Mammary epithelial cell (primary cell): ENCODE measurements at regions of chr1 and their contacts with region 1.

Region 1: DNA sequence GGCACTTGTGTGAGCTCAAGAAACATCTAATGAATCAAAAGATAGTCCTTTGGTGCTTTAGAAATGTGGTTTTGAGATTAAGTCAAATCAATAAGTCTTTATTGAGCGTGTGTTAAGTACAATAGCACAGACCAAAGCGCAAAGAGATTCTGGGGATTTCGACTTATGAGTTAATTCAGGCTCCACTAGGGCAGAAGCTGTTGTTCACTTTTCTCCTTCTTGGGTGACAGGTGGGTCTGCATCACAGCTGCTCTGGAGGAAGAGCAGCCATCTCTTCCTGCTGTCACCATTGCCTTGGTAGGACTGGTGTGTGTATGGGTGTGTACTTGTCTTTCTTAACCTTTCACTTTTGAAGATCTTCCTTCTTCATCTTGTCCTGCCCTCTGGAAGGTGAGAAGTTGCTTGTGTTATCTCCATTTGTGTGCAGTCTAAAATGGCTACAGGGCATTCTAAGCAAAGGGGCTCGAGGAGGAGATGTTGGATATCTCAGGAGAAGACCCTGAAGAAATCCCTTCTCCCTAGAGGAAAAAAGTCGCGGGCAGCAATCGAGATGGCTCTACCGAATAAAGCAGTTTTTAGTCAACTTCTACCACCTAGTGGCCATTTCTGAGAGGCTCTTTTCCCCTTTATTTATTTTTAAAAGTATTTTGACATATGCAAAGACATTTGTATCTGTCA is 22.9 kb upstream of the DISC1 start:
- DNase-seq: peak; percentile 33
- H3K4me3 ChIP-seq: peak overlapping the region; percentile 54 to 91 (median 61)
- H3K27ac ChIP-seq: no peak overlapping the region
- H3K4me1 ChIP-seq: peaks cover 6% of the 10 kb centered on the region
- H3K27me3 ChIP-seq: no peaks in the 10 kb centered on the region
- CTCF ChIP-seq: peak; percentile 70

Region 2: DNA sequence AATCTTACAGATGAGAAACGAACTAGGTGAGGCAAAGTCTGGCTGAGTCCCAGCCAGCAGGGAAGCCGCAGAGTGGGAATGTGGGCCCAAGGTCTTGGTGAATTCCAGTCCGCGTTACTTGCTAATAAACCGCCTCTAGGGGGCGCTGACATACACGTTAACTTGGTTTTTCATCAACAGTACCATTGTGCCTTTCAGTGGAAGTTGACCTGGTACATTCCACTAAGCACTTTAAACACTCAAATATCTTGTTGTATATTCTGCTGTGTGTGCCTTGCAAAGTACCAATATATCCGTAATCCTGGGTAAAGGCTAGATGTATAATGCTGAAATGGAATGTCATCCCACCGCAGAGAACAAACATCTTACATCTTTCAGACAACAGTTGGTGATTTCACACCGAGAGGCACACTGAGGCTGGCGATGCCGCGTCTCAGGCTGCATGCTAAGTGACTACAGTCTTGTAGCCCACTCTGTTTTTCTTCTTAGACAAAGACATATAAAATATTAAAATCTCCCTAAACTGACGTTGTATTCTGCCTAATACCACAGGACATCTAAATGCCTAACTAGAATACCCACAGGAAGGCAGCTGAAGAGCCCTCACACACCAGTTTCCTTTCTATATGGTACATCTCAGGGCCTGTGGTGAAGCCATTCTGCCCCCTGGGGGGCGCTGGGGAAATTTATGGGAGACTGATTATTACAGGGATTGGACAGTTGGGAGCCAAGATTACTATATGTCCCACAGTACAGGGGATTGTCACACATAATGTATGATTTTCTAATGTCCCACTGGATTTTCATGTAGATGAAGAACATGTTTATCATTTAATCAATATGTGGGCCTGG is 686.2 kb before region 1 on chr1:
- CTCF ChIA-PET with region 1: no interaction called
- dilution Hi-C with region 1: no loop called
- in situ Hi-C with region 1: no loop called
- intact Hi-C with region 1: loop called (anchors 5 kb)
- DNase-seq: peak; percentile 44
- H3K4me3 ChIP-seq: no peak overlapping the region
- H3K27ac ChIP-seq: no peak overlapping the region
- H3K4me1 ChIP-seq: no peaks in the 10 kb centered on the region
- H3K27me3 ChIP-seq: no peaks in the 10 kb centered on the region
- CTCF ChIP-seq: peak; percentile 73 to 81

Region 3: DNA sequence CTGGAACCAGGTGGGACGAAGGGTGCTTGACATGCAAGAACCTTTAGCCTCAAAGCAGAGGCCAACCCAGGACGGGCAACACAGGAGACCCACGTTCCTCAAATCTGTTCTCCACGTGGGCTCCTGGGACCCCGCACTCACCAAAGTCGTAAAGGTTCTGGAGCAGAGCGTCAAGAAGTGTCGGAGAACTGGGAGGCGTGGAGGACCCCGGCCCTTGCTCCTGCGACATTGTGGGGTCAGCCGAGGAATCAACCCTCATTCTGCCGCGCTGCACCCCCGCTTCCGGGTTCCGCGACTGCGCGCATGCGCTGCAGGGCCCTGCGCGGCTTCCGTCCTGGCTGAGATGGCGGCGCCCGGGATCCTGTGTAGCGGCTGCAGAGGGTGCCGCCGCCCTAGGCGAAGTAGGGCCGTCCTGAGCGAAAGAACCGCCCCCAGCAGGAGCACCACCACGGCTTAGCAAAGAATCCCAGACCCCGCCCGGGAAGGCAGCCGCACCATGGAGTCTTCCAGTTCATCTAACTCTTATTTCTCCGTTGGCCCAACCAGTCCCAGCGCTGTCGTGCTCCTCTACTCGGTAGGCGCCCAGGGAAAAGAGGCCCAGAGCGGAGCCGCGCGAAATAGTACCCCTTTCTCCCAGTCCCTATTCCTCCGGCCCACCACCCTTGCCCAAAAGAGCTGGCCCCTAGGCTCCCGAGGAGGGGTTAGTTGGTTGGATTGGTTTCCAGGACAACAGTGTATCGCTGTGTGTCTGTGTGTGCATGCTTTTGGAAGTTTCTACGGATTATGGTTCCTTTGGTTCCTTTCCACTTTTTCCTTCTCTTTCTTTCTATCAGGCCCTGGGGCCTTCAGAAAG is 362.6 kb before region 1 on chr1 and contains the start of gene GNPAT:
- CTCF ChIA-PET with region 1: no interaction called
- dilution Hi-C with region 1: no loop called
- in situ Hi-C with region 1: loop called in 1 of 2 experiments (anchors 25 kb)
- intact Hi-C with region 1: loop called (anchors 5 kb)
- DNase-seq: peak; percentile 83
- H3K4me3 ChIP-seq: peak within 1 kb of the TSS; percentile 83 to 99 (median 86)
- H3K27ac ChIP-seq: peak within 1 kb of the TSS; percentile 73
- H3K4me1 ChIP-seq: peaks cover 13% of the 10 kb centered on the region
- H3K27me3 ChIP-seq: no peaks in the 10 kb centered on the region
- CTCF ChIP-seq: no peak
- total RNA-seq, gene GNPAT: 29.5 to 52.2 TPM

Region 4: DNA sequence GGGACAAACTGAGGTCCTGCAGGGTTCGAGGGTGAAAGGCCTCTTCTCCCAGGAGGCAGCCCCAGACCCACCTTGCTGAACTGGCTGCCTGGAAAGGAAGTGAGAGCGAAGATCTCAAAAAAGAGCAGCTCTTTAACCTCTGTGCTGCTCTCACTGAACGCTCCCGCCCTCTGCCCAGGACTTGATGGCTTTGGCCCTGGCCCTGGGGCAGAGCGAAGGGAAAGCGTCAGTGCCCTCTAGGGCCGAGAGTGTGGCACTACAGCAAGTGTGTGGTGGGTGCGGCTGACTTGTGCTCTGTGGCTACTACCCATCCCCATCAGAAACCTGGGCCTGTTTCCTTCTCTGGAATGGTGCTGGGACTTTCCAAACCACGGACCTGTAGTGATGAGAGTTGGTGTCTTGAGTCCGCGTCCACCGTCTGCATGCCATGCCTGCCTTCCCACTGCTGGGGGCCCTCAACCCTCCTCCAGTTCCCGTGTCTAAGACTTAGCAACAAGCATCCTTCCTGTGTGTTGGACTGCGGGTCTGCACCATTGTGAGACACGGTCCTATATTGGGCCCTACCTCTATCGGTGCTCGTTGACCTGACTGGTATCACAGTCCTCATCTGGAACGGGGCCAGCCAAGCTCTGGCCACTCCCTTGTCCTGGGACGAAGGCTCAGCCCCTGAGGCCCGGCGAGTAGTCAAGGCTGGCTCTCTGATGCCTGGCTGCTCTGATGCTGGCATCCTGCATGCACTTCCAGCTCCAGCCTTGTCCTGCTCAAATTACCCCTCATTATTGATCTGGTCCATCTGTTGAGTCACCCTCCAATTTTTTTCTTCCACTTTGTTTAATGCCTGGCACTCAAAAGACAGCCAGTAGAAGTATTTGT is 203.1 kb after region 1 on chr1:
- CTCF ChIA-PET with region 1: no interaction called
- dilution Hi-C with region 1: no loop called
- in situ Hi-C with region 1: no loop called
- intact Hi-C with region 1: loop called (anchors 10 kb)
- DNase-seq: peak; percentile 34
- H3K4me3 ChIP-seq: no peak overlapping the region
- H3K27ac ChIP-seq: no peak overlapping the region
- H3K4me1 ChIP-seq: peaks cover 6% of the 10 kb centered on the region
- H3K27me3 ChIP-seq: no peaks in the 10 kb centered on the region
- CTCF ChIP-seq: peak; percentile 52 to 70